ENCODE measurements at regions of chr5 and their contacts with region 1.

Region 1: DNA sequence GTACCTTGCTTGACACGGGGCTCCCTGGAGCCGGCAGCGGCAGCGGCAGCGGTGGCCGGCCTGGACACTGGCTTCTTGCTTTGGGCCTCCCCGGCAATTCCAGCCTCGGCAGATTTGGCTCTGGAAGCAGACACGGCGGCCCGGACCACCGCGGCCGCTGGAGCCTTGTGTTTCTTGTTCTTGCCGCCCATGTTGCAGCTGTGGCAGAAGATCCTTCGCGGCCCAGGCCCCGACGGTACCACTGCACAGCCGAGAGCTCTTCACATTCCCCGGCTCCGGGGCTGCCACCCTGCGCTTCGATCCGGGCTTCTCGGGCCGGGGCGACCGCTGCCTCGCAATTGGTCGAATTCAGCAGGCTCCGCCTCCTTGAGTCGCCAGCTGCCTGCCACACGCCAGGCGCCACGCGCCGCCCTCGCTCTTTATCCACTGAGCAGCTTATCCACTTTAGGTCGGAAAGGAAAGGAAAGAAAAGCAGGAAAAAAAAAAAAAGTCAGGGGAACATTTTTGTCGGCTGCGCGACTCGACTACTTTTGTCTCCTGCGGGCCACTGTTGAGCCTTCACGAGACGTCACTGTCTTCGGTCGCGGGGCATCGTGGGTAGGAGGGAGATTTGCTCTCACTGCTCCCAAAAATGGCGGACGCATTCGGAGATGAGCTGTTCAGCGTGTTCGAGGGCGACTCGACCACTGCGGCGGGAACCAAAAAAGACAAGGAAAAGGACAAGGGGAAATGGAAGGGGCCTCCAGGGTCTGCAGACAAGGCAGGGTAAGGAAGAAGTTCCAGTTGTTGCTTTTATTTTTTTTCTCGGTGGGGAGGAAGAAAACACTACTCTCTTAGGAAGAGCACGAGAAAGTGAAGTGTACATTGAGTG is at the starts of genes DHX29 and MTREX:
- DNase-seq: peak; percentile 79 to 93 (median 83)
- ATAC-seq: peak; percentile 90
- H3K4me3 ChIP-seq: peak within 1 kb of the TSS; percentile 94
- H3K4me3 Mint-ChIP-seq: no peak within 1 kb of the TSS
- H3K27ac ChIP-seq: peak within 1 kb of the TSS; percentile 88 to 90
- H3K27ac Mint-ChIP-seq: no peak within 1 kb of the TSS
- H3K4me1 ChIP-seq: peaks cover 29% of the 10 kb centered on the region
- H3K4me1 Mint-ChIP-seq: peaks cover 35% of the 10 kb centered on the region
- H3K27me3 ChIP-seq: no peaks in the 10 kb centered on the region
- H3K27me3 Mint-ChIP-seq: no peaks in the 10 kb centered on the region
- CTCF ChIP-seq: no peak
- total RNA-seq, gene DHX29: 13.8 to 17.9 TPM
- total RNA-seq, gene MTREX: 50.9 to 54.5 TPM

Region 2: DNA sequence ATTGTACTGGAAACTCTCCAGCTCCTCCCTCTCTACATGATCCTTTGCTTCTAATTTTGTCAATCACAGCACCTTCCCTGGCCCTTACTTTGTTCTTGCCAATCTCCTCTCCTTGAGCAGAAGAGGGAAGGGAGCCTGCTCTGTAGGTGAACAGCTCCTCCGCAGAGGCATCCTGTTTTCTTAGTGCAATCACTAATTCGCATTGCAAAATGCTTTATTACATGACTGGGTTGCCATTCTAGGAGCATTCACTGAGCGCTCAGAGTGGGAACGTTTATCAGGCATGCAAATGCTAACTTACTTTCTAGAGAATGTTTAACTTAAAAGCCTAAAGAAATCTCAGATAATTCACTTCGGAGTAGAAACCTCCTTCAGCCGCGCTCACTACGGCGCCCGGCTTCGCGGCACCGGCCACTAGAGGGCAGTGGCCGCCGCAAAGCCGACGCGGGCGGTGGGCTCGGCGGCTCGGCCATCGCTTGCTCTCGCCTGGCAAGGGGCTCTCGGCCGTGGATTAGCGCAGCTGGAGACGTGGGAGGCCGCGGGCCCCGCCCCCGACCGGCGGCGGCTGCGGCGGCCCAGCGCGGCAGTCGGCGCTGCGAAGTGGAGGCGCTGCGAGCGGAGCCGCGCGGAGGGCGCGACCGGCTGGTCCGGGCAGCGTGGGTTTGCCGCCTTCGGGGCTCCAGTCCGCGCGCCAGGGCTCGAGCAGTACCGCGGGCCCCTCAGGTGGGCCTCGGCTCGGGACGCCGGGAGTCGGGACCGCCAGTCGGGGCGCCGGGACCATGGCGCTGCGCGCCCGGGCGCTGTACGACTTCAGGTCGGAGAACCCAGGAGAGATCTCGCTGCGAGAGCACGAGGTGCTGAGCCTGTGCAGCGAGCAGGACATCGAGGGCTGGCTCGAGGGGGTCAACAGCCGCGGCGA is 790.2 kb before region 1 on chr5 and contains the start of gene SNX18:
- CTCF ChIA-PET with region 1: interaction called, 3 read pairs
- POLR2A ChIA-PET with region 1: interaction called, 3 read pairs
- intact Hi-C with region 1: loop called in 1 of 2 experiments (anchors 5 kb)
- DNase-seq: peak; percentile 84 to 97 (median 91)
- ATAC-seq: peak; percentile 90
- H3K4me3 ChIP-seq: peak within 1 kb of the TSS; percentile 69
- H3K4me3 Mint-ChIP-seq: peak within 1 kb of the TSS; percentile 87
- H3K27ac ChIP-seq: peak within 1 kb of the TSS in 1 of 2 donors; percentile 61
- H3K27ac Mint-ChIP-seq: peak within 1 kb of the TSS; percentile 70
- H3K4me1 ChIP-seq: peaks cover 40% of the 10 kb centered on the region
- H3K4me1 Mint-ChIP-seq: peaks cover 34% of the 10 kb centered on the region
- H3K27me3 ChIP-seq: no peaks in the 10 kb centered on the region
- H3K27me3 Mint-ChIP-seq: peaks cover 4% of the 10 kb centered on the region
- CTCF ChIP-seq: peak; percentile 95
- total RNA-seq, gene SNX18: 10.1 to 10.3 TPM

Region 3: DNA sequence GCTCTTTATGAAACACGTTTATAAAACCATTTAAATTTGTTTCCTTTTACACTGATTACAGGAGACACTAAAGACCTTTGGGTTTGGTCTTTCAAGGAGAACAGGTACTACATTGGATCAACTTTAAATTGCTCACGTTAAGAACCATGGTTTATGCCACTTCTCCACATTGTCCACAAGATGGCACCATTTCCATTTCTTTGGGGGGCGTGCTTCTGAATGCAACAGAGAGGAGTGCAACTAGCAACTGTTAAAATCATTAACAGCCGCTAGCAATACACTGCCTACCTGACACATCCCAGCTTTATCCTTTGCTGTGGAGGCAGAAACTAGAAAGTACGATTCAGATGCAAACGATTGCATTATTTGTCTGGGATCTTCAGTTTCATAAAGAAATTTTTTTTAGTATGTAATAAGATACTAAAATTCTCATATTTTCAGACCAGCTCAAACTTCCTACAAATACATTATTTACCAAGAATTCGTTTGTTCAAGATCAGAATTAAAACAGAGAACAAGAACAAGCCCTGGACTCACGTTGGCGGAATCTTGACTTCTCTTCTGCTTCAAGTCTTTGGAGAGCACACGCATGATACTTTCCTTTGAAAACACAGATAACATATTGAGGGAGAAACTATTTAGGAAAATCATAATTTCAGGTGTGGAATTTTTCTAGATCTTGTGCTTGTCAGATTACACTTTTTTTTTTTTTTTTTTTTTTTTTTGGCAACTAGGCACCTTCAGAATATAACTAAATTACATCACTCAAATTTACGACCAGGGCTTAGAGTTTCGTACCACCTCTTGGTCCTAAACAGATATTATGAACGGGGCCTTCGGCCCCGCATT is 135.3 kb before region 1 on chr5:
- CTCF ChIA-PET with region 1: no interaction called
- POLR2A ChIA-PET with region 1: no interaction called
- intact Hi-C with region 1: loop called in 1 of 2 experiments (anchors 10 kb)
- DNase-seq: peak; percentile 18 to 90 (median 47)
- ATAC-seq: peak; percentile 82
- H3K4me3 ChIP-seq: peak overlapping the region; percentile 63
- H3K4me3 Mint-ChIP-seq: peak overlapping the region; percentile 79
- H3K27ac ChIP-seq: no peak overlapping the region
- H3K27ac Mint-ChIP-seq: no peak overlapping the region
- H3K4me1 ChIP-seq: peaks cover 28% of the 10 kb centered on the region
- H3K4me1 Mint-ChIP-seq: peaks cover 43% of the 10 kb centered on the region
- H3K27me3 ChIP-seq: peaks cover 49 to 83% of the 10 kb centered on the region in 2 experiments
- H3K27me3 Mint-ChIP-seq: peaks cover 86% of the 10 kb centered on the region
- CTCF ChIP-seq: peak; percentile 90

Region 4: DNA sequence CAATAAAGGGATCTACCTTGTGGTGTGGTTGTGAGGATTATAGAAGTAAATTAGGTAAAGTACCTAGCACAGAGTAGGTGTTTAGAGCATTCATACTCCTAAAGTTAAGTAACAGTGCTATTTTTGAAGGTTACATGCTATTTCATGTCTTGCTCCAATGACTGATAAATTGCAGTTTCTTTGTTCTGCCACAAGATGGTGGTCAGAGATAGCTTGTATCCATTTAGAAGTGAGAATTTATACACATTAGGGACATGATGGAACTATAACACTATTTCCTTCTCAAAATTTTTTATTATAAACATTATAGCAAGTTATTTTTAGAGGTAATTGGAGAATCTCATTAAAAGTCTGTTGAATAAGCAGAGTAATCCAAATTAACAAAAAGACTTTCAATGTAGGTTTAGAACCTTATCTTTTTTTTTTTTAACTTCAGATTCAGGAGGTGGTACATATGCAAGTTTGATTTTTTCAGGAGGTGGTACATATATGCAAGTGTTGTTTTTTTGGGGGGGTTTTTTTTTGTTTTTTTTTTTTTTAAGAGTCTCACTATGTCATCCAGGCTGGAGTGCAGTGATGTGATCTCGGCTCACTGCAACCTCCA is 17.3 kb after region 1 on chr5:
- CTCF ChIA-PET with region 1: interaction called, 3 read pairs
- POLR2A ChIA-PET with region 1: interaction called, 7 read pairs
- intact Hi-C with region 1: loop called in 1 of 2 experiments (anchors 2 kb)
- DNase-seq: peak in 3 of 14 experiments; percentile 58 to 60 (median 59)
- ATAC-seq: peak; percentile 82
- H3K4me3 ChIP-seq: no peak overlapping the region
- H3K4me3 Mint-ChIP-seq: no peak overlapping the region
- H3K27ac ChIP-seq: no peak overlapping the region
- H3K27ac Mint-ChIP-seq: no peak overlapping the region
- H3K4me1 ChIP-seq: peaks cover under 1% of the 10 kb centered on the region
- H3K4me1 Mint-ChIP-seq: peaks cover 48% of the 10 kb centered on the region
- H3K27me3 ChIP-seq: no peaks in the 10 kb centered on the region
- H3K27me3 Mint-ChIP-seq: no peaks in the 10 kb centered on the region
- CTCF ChIP-seq: peak; percentile 61

Region 5: DNA sequence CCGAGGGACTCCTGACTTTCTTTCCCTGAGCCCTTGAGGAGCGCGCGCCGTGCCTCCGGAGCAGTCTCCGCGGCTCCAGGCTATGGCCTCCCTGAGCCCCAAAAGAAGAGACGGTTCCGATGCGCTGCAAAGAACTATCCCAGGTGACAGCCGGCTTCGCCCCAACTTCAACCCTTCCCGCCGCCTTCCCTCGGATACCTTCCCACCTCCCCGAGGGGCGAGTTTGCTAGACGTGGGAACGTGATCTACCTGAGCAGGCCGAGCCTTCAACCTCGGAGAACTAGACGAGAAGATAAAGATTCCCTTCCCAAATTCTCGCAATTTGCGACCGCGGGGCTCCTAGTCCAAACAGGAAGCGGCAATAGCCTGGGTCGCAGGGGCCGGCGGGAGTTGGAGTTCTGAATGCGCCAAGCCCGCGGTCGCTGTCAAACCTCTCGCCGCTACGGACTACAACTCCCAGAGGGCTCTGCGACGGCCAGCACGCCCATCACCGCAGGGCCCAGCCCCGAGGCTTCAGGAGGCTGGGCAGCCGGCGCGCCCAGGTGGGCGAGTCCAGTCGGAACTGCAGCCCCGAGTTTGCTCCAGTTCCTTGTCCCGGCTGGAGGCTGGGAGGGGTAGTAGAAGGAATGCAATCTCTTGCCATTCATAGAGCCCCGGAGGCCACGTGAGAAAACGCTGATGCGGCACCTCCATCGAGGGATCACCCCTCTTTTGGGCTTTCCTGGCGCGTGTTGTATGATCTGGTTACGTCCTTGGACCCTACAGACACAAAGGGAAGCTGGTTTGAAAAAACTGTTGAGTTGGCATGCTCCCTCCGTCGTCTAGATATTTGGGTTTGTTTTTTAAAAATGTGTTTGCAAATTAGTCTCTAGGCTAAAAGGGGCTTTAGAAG is 404.6 kb after region 1 on chr5 and contains the start of gene SLC38A9:
- CTCF ChIA-PET with region 1: no interaction called
- POLR2A ChIA-PET with region 1: no interaction called
- intact Hi-C with region 1: loop called in 1 of 2 experiments (anchors 2 kb)
- DNase-seq: peak; percentile 83 to 95 (median 90)
- ATAC-seq: peak; percentile 99
- H3K4me3 ChIP-seq: peak within 1 kb of the TSS; percentile 90
- H3K4me3 Mint-ChIP-seq: peak within 1 kb of the TSS; percentile 99
- H3K27ac ChIP-seq: peak within 1 kb of the TSS in 1 of 2 donors; percentile 50
- H3K27ac Mint-ChIP-seq: peak within 1 kb of the TSS; percentile 82
- H3K4me1 ChIP-seq: peaks cover 20% of the 10 kb centered on the region
- H3K4me1 Mint-ChIP-seq: peaks cover 39% of the 10 kb centered on the region
- H3K27me3 ChIP-seq: no peaks in the 10 kb centered on the region
- H3K27me3 Mint-ChIP-seq: no peaks in the 10 kb centered on the region
- CTCF ChIP-seq: no peak
- total RNA-seq, gene SLC38A9: 10.0 to 10.3 TPM